ENCODE measurements at regions of chr19 and their contacts with region 1.

Region 1: GRCh38 chr19:8654591-8655339 is 24.3 kb downstream of the NFILZ start:
- DNase-seq: peak; percentile 71
- H3K4me3 Mint-ChIP-seq: no peak overlapping the region
- H3K27ac Mint-ChIP-seq: no peak overlapping the region
- H3K4me1 Mint-ChIP-seq: peaks cover 13% of the 10 kb centered on the region
- H3K27me3 Mint-ChIP-seq: no peaks in the 10 kb centered on the region

Region 2: DNA sequence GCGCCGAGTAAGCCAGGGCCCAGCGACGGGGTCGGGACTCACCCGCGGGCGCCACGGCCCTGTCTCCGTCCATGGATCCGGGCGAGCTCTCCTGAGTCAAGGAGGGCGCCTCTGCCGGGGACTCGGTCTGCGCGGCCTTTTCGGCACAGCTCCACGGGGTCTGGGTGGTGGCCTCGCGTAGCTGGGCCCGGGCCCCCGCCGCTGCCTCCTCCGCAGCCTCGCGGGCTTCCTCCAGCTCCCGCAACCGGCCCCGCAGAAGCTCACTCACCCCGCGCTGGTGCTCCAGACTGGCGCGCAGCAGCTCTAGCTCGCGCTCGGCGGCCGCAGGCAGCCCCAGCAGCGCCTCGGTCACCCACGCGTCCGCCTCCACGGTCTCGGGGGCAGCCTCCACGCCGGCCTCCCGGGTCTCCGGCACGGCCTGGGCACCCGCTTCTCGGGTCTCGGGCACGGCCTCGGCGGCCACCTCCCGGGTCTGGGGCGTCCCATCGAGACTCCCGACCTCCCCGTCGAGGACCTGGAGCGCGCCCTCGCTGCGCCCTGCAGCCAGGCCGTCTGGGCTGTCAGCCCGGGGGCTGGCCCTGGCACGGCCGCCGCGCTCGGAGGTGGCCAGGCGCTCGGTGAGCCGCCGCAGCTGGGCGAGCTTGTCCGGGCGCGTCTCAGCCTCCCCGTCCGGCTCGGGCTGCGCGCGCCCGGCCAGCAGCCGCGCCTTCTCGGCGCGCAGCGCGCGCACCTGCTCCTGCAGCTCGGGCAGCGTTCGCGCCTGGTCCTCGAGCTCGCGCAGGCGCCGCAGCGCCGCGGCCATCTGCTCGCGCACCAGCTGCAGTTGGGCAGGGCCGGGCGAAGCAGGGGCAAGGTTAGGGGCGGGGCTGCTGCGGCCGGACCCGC is 320.1 kb before region 1 on chr19:
- CTCF ChIA-PET with region 1: no interaction called
- intact Hi-C with region 1: no loop called
- DNase-seq: no peak
- H3K4me3 Mint-ChIP-seq: no peak overlapping the region
- H3K27ac Mint-ChIP-seq: no peak overlapping the region
- H3K4me1 Mint-ChIP-seq: peaks cover 4% of the 10 kb centered on the region
- H3K27me3 Mint-ChIP-seq: peaks cover 24% of the 10 kb centered on the region

Region 3: GRCh38 chr19:8675066-8675465 is 20.3 kb after region 1 on chr19:
- CTCF ChIA-PET with region 1: no interaction called
- intact Hi-C with region 1: no loop called
- DNase-seq: no peak
- H3K4me3 Mint-ChIP-seq: no peak overlapping the region
- H3K27ac Mint-ChIP-seq: no peak overlapping the region
- H3K4me1 Mint-ChIP-seq: peaks cover 11% of the 10 kb centered on the region
- H3K27me3 Mint-ChIP-seq: no peaks in the 10 kb centered on the region

Region 4: DNA sequence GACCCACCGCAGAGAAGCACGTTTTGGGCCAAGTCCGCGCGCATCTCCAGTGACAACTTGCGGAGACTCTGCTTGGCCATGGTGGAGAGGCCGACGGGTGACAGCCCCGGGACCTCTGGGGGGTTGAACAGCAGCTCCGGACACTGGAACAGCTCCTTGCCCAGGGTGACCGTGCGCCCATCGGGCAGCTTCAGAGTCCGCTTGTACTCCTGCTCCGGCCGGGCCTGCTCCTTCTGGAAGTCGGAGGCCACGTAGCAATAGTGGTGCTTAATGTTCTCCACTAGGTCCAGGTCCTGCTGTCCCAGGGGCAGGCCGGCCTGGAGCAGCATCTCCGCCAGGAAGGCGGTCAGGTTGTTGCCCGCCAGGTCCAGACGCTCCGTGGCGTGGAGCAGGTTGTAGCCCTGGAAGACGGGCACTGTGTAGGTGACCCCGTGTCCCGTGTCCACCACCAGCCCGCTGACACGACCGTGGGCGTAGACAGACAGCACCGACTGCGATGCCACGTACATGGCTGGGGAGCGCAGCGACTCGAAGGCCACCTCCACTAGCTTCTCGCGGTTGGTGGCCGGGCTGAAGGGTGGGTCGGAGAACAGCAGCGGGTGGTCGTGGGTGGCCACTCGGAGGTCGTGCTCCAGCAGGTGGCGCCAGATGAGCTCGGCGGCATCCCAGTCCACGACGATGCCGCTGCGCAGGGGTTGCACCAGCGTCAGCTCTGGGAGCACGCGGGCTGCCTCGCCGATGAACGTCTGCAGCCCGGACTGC is 43.1 kb after region 1 on chr19:
- CTCF ChIA-PET with region 1: interaction called, 75 read pairs
- intact Hi-C with region 1: loop called (anchors 1 kb)
- DNase-seq: no peak
- H3K4me3 Mint-ChIP-seq: no peak overlapping the region
- H3K27ac Mint-ChIP-seq: no peak overlapping the region
- H3K4me1 Mint-ChIP-seq: peaks cover 24% of the 10 kb centered on the region
- H3K27me3 Mint-ChIP-seq: peaks cover 3% of the 10 kb centered on the region

Region 5: DNA sequence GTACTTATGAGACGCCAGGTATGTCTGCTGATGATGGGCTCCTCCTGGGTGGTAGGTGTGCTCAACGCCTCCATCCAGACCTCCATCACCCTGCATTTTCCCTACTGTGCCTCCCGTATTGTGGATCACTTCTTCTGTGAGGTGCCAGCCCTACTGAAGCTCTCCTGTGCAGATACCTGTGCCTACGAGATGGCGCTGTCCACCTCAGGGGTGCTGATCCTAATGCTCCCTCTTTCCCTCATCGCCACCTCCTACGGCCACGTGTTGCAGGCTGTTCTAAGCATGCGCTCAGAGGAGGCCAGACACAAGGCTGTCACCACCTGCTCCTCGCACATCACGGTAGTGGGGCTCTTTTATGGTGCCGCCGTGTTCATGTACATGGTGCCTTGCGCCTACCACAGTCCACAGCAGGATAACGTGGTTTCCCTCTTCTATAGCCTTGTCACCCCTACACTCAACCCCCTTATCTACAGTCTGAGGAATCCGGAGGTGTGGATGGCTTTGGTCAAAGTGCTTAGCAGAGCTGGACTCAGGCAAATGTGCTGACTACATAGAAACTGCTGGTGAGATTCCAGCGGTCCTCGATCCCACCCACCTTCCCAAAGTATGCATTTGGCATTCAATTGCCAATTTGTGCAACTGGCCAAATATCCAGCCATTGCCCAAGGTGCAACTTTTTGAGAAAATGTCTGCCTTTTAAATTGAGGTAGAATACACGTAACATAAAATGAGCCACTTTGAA is 76.8 kb after region 1 on chr19:
- CTCF ChIA-PET with region 1: no interaction called
- intact Hi-C with region 1: no loop called
- DNase-seq: peak; percentile 32
- H3K4me3 Mint-ChIP-seq: no peak overlapping the region
- H3K27ac Mint-ChIP-seq: no peak overlapping the region
- H3K4me1 Mint-ChIP-seq: no peaks in the 10 kb centered on the region
- H3K27me3 Mint-ChIP-seq: no peaks in the 10 kb centered on the region

Region 6: GRCh38 chr19:9075064-9075949 is 420.5 kb after region 1 on chr19:
- CTCF ChIA-PET with region 1: no interaction called
- intact Hi-C with region 1: loop called (anchors 2 kb)
- DNase-seq: no peak
- H3K4me3 Mint-ChIP-seq: no peak overlapping the region
- H3K27ac Mint-ChIP-seq: no peak overlapping the region
- H3K4me1 Mint-ChIP-seq: no peaks in the 10 kb centered on the region
- H3K27me3 Mint-ChIP-seq: no peaks in the 10 kb centered on the region